ENCODE measurements at regions of chr2 and their contacts with region 1.

Region 1: DNA sequence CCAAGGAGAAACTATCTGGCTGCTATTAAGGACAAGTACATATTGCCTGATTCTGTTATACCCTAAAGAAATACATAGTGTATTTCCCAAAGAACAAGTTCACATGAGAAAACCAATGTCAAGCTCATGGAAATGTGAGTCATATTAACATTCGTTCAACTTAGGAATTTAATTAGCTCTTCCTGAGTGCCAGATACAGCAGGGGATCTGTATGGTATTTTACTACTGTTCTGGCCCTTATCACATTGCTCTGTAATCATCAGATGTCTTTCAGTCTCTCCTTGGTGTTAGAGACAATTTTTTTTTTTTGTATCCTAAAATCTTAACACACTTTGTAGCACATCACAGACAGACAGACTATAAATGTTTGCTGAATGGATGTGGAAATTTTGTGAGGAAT is 395.0 kb upstream of the CRIM1 start:
- DNase-seq: no peak
- ATAC-seq: no peak
- H3K4me3 Mint-ChIP-seq: no peak overlapping the region
- H3K27ac Mint-ChIP-seq: no peak overlapping the region
- H3K4me1 Mint-ChIP-seq: no peaks in the 10 kb centered on the region
- H3K27me3 Mint-ChIP-seq: no peaks in the 10 kb centered on the region
- CTCF ChIP-seq: no peak

Region 2: DNA sequence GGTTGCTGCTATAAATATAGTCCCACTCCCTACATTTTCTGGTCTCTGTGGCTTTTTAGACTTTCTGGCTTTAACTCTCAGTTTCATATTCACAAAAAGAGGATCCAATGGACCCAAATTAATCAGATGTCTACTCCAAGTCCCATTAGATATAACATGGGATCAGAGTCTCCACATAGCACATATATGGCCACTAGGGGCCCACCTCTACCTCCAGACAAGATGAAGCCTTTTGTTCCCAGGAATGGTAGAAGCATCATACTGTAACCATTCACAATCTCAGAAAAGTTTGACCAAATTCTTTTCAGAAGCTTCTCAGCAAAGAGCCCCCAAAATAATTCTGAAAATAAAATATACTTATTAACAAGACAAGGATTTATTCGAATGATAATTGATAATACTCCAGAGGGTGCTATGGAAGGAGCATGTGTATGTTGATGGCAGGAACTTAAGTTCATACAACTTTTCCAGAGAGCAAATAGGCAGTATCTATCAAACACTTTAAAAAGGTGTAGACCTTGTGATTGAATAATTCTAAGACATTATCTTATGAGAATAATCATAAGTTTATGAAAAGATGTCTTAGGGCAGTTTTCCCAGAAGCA is 12.6 kb after region 1 on chr2:
- CTCF ChIA-PET with region 1: interaction called, 11 read pairs
- POLR2A ChIA-PET with region 1: no interaction called
- intact Hi-C with region 1: no loop called
- DNase-seq: peak; percentile 36
- ATAC-seq: peak; percentile 55
- H3K4me3 Mint-ChIP-seq: no peak overlapping the region
- H3K27ac Mint-ChIP-seq: no peak overlapping the region
- H3K4me1 Mint-ChIP-seq: peaks cover 2% of the 10 kb centered on the region
- H3K27me3 Mint-ChIP-seq: no peaks in the 10 kb centered on the region
- CTCF ChIP-seq: peak; percentile 59